PC-3 (cell line): ENCODE measurements at regions of chr4 and their contacts with region 1.

Region 1: GRCh38 chr4:141346144-141346543 is 125.4 kb downstream of the ZNF330 start:
- DNase-seq: peak; percentile 81
- ATAC-seq: peak; percentile 59
- H3K4me3 ChIP-seq: no peak overlapping the region
- H3K27ac ChIP-seq: no peak overlapping the region
- H3K4me1 ChIP-seq: peaks cover 16% of the 10 kb centered on the region
- H3K27me3 ChIP-seq: no peaks in the 10 kb centered on the region
- CTCF ChIP-seq: peak; percentile 84

Region 2: DNA sequence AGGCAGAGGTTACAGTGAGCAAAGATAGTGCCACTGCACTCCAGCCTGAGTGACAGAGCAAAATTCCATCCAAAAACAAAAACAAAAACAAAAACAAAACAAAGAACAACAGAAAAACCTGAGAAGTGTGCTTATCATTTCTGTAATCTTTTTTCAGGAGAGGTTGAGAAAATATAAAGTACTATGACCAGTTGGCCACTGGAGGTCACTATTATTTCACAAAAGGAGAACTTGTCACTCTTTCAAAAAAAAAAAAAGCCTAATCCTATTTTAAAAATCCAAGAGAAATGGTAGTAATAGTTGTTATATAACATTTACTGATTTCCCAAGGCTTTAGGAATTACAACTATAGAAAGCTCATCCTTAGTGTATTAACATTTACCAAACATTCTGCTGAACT is 187.9 kb before region 1 on chr4:
- CTCF ChIA-PET with region 1: interaction called, 5 read pairs
- POLR2A ChIA-PET with region 1: no interaction called
- intact Hi-C with region 1: loop called (anchors 5 kb)
- DNase-seq: peak; percentile 51
- ATAC-seq: no peak
- H3K4me3 ChIP-seq: no peak overlapping the region
- H3K27ac ChIP-seq: no peak overlapping the region
- H3K4me1 ChIP-seq: no peaks in the 10 kb centered on the region
- H3K27me3 ChIP-seq: no peaks in the 10 kb centered on the region
- CTCF ChIP-seq: peak; percentile 77

Region 3: DNA sequence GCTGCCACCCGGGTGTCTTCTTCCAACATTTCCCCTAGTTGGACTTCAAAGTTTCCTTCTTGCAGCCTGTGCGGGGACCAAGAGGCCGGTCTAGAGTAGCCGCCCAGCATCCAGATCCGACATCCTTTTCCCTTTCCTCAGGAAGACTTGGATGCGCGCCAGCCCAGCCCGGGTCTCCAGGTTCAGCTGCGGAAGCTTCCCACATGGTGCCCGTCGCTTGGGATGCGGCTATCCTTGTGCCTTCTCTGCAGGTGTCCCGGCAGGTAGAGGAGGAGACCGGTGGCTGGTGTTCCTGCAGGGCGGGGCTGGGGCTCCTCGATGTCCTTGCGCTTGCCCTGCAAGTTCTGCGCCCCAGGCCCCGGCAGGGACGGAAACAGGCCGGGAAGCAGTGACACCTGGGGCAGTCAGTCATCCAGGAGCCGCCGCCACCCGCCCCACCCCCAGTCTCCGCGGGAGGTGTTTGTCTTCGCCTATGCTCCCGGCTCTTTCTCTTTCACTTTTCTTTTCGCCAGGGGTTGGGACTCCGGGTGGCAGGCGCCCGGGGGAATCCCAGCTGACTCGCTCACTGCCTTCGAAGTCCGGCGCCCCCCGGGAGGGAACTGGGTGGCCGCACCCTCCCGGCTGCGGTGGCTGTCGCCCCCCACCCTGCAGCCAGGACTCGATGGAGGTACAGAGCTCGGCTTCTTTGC is 290.1 kb after region 1 on chr4 and contains the start of gene IL15:
- CTCF ChIA-PET with region 1: no interaction called
- POLR2A ChIA-PET with region 1: no interaction called
- intact Hi-C with region 1: loop called (anchors 5 kb)
- DNase-seq: peak; percentile 86
- ATAC-seq: peak; percentile 75
- H3K4me3 ChIP-seq: peak within 1 kb of the TSS; percentile 92
- H3K27ac ChIP-seq: peak within 1 kb of the TSS; percentile 84
- H3K4me1 ChIP-seq: peaks cover 15% of the 10 kb centered on the region
- H3K27me3 ChIP-seq: no peaks in the 10 kb centered on the region
- CTCF ChIP-seq: no peak
- total RNA-seq, gene IL15: 7.1 and 9.3 TPM in 2 replicates

Region 4: GRCh38 chr4:141654098-141654497 is 308.0 kb after region 1 on chr4:
- CTCF ChIA-PET with region 1: interaction called, 5 read pairs
- POLR2A ChIA-PET with region 1: no interaction called
- intact Hi-C with region 1: loop called (anchors 5 kb)
- DNase-seq: peak; percentile 65
- ATAC-seq: peak; percentile 65
- H3K4me3 ChIP-seq: no peak overlapping the region
- H3K27ac ChIP-seq: no peak overlapping the region
- H3K4me1 ChIP-seq: no peaks in the 10 kb centered on the region; the same call in 1 of the 2 replicates
- H3K27me3 ChIP-seq: no peaks in the 10 kb centered on the region
- CTCF ChIP-seq: peak; percentile 84

Region 5: DNA sequence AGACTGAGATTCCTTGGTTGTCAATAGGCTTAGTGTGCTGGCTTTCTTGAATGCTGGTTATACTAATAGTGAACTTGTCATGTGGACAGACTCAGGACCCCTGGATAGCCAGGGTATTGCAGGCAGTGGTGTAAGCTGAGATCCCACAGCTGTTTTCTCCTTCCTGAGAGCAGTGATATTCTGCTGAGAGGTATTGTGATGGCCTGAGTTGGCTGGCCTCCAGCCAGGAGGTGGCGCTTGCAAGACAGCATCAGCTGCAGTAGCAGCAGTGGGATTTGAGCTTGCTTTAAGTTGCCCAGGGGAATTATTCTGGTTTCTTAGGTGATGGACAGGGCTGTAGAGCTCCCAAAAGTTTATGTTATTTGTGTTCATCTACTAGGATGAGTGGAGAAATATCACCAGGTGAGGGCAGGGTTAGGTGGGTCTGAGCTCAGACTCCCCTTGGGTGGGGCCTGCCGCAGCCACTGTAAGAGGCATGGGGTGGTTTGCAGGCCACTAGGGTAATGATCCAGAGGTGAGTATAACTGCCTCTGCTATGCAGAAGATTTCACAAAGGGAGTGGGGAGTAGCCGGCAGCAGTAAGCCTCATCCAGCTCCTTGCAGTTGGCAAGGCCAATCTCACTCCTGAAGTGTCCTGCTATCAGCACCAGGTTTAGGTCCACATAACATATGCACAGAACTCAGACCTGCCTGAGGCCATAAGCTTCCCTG is 356.5 kb after region 1 on chr4:
- CTCF ChIA-PET with region 1: no interaction called
- POLR2A ChIA-PET with region 1: no interaction called
- intact Hi-C with region 1: loop called (anchors 5 kb)
- DNase-seq: peak; percentile 34
- ATAC-seq: no peak
- H3K4me3 ChIP-seq: no peak overlapping the region
- H3K27ac ChIP-seq: no peak overlapping the region
- H3K4me1 ChIP-seq: peaks cover 9% of the 10 kb centered on the region; the same call in 1 of the 2 replicates
- H3K27me3 ChIP-seq: no peaks in the 10 kb centered on the region
- CTCF ChIP-seq: peak; percentile 38

Region 6: GRCh38 chr4:141711014-141711610 is 365.0 kb after region 1 on chr4:
- CTCF ChIA-PET with region 1: interaction called, 9 read pairs
- POLR2A ChIA-PET with region 1: no interaction called
- intact Hi-C with region 1: loop called (anchors 1 kb)
- DNase-seq: peak; percentile 61
- ATAC-seq: peak; percentile 50
- H3K4me3 ChIP-seq: no peak overlapping the region
- H3K27ac ChIP-seq: no peak overlapping the region
- H3K4me1 ChIP-seq: peaks cover 24% of the 10 kb centered on the region
- H3K27me3 ChIP-seq: no peaks in the 10 kb centered on the region
- CTCF ChIP-seq: peak; percentile 76

Region 7: GRCh38 chr4:142043509-142043908 is 697.4 kb after region 1 on chr4:
- CTCF ChIA-PET with region 1: no interaction called
- POLR2A ChIA-PET with region 1: no interaction called
- intact Hi-C with region 1: loop called (anchors 10 kb)
- DNase-seq: peak; percentile 89
- ATAC-seq: peak; percentile 96
- H3K4me3 ChIP-seq: no peak overlapping the region
- H3K27ac ChIP-seq: peak overlapping the region; percentile 48
- H3K4me1 ChIP-seq: peaks cover 41% of the 10 kb centered on the region
- H3K27me3 ChIP-seq: no peaks in the 10 kb centered on the region
- CTCF ChIP-seq: no peak